HEK293 (cell line): ENCODE measurements at regions of chr12 and their contacts with region 1.

Region 1: DNA sequence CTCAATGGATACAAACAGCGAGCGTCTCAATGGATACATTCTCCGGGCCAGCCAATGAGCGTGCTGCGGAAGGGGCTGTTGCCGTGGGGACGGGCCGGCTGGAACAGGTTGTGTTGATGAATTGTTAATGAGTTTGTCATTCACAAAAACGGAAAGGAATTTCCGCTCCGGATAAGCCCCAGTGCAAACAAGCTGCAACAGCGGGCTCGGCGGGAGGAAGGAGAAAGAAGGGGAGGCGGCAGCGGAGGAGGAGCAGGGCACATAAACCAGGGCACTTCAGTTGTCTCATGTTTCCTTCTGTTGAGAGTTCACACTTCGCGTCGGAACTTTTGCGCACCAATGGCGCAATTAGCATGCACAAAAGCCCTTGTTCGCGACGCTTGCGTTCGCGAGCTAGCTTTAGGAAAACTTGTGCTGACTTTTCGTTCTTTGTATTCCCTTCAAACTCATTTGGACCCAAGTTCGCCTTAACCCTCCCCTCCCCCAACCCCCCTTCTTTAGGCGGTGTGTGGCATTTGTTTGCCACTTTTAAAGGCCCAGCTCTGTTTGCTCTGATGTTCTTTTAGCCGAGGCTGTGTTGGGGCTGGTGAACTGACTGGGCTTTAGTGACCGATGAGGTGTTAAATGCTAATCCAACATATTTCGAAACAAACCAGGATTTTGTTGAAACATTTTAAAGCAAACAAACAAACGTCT is at the start of gene DUSP6:
- H3K4me3 ChIP-seq: peak within 1 kb of the TSS; percentile 69
- H3K27ac ChIP-seq: peak within 1 kb of the TSS; percentile 96
- H3K4me1 ChIP-seq: peaks cover 26% of the 10 kb centered on the region
- CTCF ChIP-seq: no peak

Region 2: DNA sequence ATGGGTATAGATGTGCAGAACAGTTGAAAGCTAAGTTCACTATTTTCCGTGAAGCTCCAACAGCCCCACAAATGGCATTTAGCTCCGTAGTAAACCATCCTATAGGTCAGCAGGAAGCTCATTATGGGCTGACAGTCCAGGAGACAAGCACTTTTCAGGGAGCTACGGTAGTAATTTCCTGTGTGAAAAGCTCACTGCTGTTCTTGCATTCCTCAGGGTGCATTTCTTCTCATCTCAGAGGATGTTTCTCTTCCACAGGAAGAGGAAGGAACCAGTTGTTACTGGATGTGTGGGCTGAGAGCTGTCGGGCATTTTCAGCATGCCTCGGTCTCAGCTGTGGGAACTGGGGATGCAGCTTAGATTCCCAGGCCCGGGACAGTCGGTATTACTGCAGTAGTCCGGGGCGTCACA is 99.2 kb after region 1 on chr12:
- CTCF ChIA-PET with region 1: no interaction called
- POLR2A ChIA-PET with region 1: interaction called, 16 read pairs
- H3K4me3 ChIP-seq: no peak overlapping the region
- H3K27ac ChIP-seq: no peak overlapping the region
- H3K4me1 ChIP-seq: peaks cover 27% of the 10 kb centered on the region
- CTCF ChIP-seq: no peak

Region 3: DNA sequence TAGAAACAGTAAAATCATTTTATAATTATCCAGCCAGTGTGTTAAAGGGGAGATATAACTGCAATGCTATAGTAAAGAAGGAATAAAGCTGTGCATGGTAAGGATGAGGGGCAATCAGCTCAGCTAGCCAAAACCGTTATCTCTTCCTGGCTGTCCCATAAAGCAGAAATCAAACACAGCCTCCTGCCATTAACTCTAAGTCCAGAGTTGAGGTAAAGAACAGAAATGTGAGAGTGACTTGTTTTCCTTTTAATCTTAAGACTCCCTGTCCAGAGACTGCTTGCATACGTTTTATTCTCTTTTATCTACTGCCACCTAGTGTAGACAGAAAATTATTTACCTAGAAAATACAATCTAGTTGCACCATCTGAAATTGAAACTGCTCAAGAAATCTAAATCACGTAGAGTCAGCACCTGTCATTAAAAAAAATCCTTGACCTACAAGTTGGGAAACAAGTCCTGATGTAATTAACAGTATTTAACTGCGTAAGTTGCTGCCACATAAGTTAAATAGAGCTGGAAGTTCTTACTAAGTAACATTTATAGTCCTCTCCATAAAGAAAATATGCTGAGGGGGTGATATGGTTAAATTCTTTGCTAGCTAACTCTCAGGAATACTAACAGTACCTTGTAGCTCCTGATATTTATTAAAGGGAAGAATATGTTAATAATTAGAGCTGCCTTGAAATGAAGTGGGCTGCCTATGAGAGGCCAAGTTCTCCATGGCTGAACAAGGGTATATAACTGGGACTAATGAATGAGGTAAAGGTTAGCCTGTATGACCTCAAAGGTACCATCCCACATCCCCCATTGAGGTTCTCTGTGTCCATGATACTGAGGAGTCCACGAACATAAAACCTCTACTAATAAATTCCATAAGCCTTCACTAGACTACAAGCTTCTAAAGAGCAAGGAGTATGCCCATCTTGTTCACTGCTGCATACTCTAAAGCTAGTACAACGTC is 109.3 kb after region 1 on chr12:
- CTCF ChIA-PET with region 1: interaction called, 15 read pairs
- POLR2A ChIA-PET with region 1: interaction called, 5 read pairs
- H3K4me3 ChIP-seq: no peak overlapping the region
- H3K27ac ChIP-seq: no peak overlapping the region
- H3K4me1 ChIP-seq: peaks cover 7% of the 10 kb centered on the region
- CTCF ChIP-seq: no peak; the same call in 1 of the 2 replicates